Heart right ventricle (tissue), 16 donors: ENCODE measurements at regions of chr19 and their contacts with region 1.

Region 1: GRCh38 chr19:44002566-44003460 is at the start of gene ZNF230:
- DNase-seq: peak; percentile 81 to 96
- ATAC-seq: peak; percentile 99 to 100 (median 100)
- H3K4me3 ChIP-seq: peak within 1 kb of the TSS; percentile 42 to 94 (median 80)
- H3K27ac ChIP-seq: peak within 1 kb of the TSS in 9 of 10 donors; percentile 64 to 88 (median 78)
- H3K4me1 ChIP-seq: peaks cover 0 to 31% (median 17%) of the 10 kb centered on the region in 9 donors
- H3K27me3 ChIP-seq: no peaks in the 10 kb centered on the region
- CTCF ChIP-seq: no peak
- total RNA-seq, gene ZNF230: 1.6 to 4.3 (median 3.4) TPM

Region 2: GRCh38 chr19:43934985-43935708 is 67.7 kb before region 1 on chr19 and contains the start of gene ZNF45:
- intact Hi-C with region 1: loop called in 1 of 10 experiments (anchors 10 kb)
- DNase-seq: peak; percentile 85 to 94
- ATAC-seq: peak; percentile 97 to 99 (median 99)
- H3K4me3 ChIP-seq: peak within 1 kb of the TSS; percentile 43 to 76 (median 66)
- H3K27ac ChIP-seq: peak within 1 kb of the TSS; percentile 39 to 92 (median 86)
- H3K4me1 ChIP-seq: peaks cover 0 to 24% (median 18%) of the 10 kb centered on the region in 9 donors
- H3K27me3 ChIP-seq: no peaks in the 10 kb centered on the region
- CTCF ChIP-seq: no peak
- total RNA-seq, gene ZNF45: 7.0 to 10.7 (median 8.0) TPM

Region 3: DNA sequence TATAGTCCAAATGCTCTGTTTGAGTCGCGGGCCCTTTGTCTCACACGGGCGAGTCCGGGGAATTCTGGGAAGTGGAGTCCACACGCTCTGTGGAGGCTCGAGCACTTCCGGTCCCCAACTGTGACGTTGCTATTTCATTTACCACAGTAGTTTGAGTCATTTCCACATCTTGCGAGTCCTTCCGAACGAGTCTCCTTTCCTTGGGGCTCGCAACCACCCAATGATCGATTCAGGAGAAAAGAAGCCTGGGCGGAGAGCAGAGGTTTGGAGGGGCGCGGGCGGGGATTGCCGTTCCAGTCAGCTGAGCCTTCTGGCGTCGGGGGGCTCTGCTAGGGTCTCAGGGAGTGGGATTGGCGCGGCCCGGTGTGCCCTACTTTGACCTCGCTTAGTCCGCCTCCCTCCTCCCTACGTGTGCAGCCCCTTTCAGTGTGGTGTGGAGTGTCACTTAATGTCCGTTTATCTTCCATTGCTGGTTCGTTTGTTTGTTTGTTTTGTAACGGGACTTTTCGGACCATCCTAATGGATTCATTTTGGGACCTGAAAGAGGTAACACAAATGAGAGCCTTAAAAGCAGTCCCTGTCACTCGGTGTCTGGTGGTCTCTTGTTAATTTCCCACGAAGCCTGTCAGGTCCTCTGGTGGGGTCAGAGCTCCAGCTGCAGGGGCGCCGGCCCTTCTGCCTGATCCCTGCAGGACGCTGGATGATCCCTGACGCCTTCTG is 22.6 kb after region 1 on chr19 and contains the start of gene ZNF222:
- intact Hi-C with region 1: loop called in 2 of 10 experiments (anchors 2 kb)
- DNase-seq: peak; percentile 76 to 89
- ATAC-seq: peak; percentile 97 to 100 (median 99)
- H3K4me3 ChIP-seq: peak within 1 kb of the TSS; percentile 63 to 89 (median 81)
- H3K27ac ChIP-seq: peak within 1 kb of the TSS in 9 of 10 donors; percentile 58 to 85 (median 76)
- H3K4me1 ChIP-seq: peaks cover 0 to 13% (median 11%) of the 10 kb centered on the region in 9 donors
- H3K27me3 ChIP-seq: no peaks in the 10 kb centered on the region
- CTCF ChIP-seq: no peak
- total RNA-seq, gene ZNF222: 2.1 to 5.1 (median 3.6) TPM

Region 4: DNA sequence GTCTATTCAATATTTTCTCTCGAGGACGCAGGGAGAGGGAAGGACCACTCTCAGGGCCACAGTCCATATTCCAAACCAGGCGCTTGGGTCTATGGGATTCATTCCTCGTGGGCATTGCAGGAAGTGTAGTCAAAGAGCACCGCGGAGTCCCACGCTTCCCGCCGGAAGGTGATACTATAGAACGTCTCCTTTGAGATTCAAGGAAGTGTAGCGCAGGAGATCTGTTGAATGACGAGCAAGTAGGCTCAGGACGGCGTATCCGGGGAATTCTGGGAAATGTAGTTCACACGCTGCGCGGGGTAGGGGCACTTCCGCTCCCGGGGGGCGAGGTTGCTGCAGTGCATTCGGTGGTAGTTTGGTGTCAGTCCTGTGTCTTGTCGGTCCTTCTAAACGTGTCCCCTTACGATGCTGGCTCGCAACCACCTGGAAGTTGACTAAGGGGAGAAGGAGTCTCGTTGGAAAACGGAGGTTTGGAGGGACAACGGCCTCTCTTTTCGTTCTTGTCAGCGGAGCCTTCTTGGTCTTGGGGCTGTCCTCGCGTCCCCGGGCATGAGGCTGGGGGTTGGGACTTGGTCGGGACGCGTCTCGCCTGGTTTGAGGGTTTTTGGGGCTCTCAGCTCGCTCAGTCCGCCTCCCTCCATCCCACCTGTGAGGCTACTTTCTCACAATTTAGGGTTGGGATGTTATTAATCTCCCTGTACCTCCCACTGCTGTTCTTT is 69.2 kb after region 1 on chr19 and contains the start of gene ZNF284:
- intact Hi-C with region 1: loop called in 1 of 10 experiments (anchors 5 kb)
- DNase-seq: peak; percentile 80 to 91
- ATAC-seq: peak; percentile 97 to 100 (median 100)
- H3K4me3 ChIP-seq: peak within 1 kb of the TSS; percentile 48 to 76 (median 69)
- H3K27ac ChIP-seq: peak within 1 kb of the TSS in 8 of 10 donors; percentile 51 to 72 (median 63)
- H3K4me1 ChIP-seq: peaks cover 0 to 21% (median 15%) of the 10 kb centered on the region in 9 donors
- H3K27me3 ChIP-seq: no peaks in the 10 kb centered on the region
- CTCF ChIP-seq: no peak
- total RNA-seq, gene ZNF284: 1.2 to 2.6 (median 1.8) TPM

Region 5: GRCh38 chr19:44356383-44357111 is 353.7 kb after region 1 on chr19 and contains the start of gene ZNF112:
- intact Hi-C with region 1: loop called in 1 of 10 experiments (anchors 10 kb)
- DNase-seq: peak; percentile 78 to 93
- ATAC-seq: peak; percentile 99 to 100 (median 100)
- H3K4me3 ChIP-seq: peak within 1 kb of the TSS; percentile 29 to 81 (median 60)
- H3K27ac ChIP-seq: peak within 1 kb of the TSS in 9 of 10 donors; percentile 11 to 76 (median 59)
- H3K4me1 ChIP-seq: peaks cover 0 to 14% (median 6%) of the 10 kb centered on the region in 9 donors
- H3K27me3 ChIP-seq: peaks cover 0 to 3% (median 0%) of the 10 kb centered on the region in 7 donors
- CTCF ChIP-seq: no peak
- total RNA-seq, gene ZNF112: 2.6 to 6.4 (median 5.0) TPM